ENCODE measurements at regions of chr11 and their contacts with region 1.

Region 1: DNA sequence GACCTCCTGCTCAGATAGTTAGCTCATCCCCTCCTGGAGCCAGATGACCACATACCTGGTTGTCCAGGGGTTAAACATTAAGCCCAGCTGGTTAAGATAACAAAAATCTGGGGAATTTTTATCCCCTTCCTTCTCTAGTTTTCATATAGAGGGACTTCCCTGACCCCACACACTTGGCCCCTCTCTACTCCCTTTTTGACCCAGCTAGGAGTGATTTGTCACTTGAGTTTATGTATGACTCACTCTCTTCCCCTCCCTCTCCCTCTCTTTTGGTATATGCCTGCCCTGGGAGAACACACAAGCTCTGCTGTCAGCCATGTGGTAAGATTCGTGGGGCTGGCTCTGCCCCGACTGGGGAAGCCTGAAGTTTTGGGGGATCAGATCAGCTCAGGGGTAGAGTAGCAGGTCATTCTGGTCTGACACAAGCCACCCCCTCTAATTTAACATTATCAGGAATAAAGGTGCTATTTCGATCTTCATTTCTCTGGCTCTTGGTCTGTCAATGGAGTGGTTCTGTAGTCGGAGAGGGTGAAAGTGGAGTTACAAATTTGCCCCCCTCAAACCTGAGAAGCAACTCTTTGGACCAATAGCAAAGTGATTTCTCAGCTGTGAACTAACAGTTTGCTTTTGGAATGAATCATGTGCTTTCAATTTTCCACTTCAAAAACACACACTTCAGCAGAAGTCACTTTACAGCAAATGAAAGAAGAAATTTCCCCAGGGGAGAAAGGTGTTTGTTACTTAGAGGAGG is 415.3 kb upstream of the CADM1 start:
- DNase-seq: peak; percentile 91
- ATAC-seq: peak; percentile 66
- H3K4me3 ChIP-seq: peak overlapping the region; percentile 15; the same call in 1 of the 2 replicates
- H3K27ac ChIP-seq: peak overlapping the region; percentile 94
- H3K4me1 ChIP-seq: peaks cover 70% of the 10 kb centered on the region
- H3K27me3 ChIP-seq: no peaks in the 10 kb centered on the region
- CTCF ChIP-seq: no peak
- EP300 ChIP-seq: peak; percentile 92 to 93; a peak in 3 of 4 replicates
- POLR2A ChIP-seq: peak; percentile 70
- RAD21 ChIP-seq: peak; percentile 12; the same call in 1 of the 2 replicates

Region 2: GRCh38 chr11:115504276-115505158 is 415.0 kb before region 1 on chr11 and contains the start of gene CADM1:
- CTCF ChIA-PET with region 1: no interaction called
- POLR2A ChIA-PET with region 1: no interaction called
- RAD21 ChIA-PET with region 1: no interaction called
- SMC1A ChIA-PET with region 1: no interaction called
- in situ Hi-C with region 1: no loop called
- intact Hi-C with region 1: loop called (anchors 10 kb)
- DNase-seq: no peak
- ATAC-seq: no peak
- H3K4me3 ChIP-seq: no peak within 1 kb of the TSS
- H3K27ac ChIP-seq: no peak within 1 kb of the TSS
- H3K4me1 ChIP-seq: no peaks in the 10 kb centered on the region
- H3K27me3 ChIP-seq: peaks cover 12 to 29% of the 10 kb centered on the region in 2 experiments
- CTCF ChIP-seq: 0 out of 6 replicates have a peak, but pooled peaks of 2 of the 3 experiments have one; percentile 3 to 18
- EP300 ChIP-seq: no peak
- POLR2A ChIP-seq: peak; percentile 64; the same call in 1 of the 2 replicates
- RAD21 ChIP-seq: no peak
- polyA plus RNA-seq, gene CADM1: not detected

Region 3: GRCh38 chr11:115585361-115586024 is 334.0 kb before region 1 on chr11:
- CTCF ChIA-PET with region 1: no interaction called
- POLR2A ChIA-PET with region 1: interaction called, 3 read pairs
- RAD21 ChIA-PET with region 1: interaction called, 5 read pairs
- SMC1A ChIA-PET with region 1: interaction called, 8 read pairs
- in situ Hi-C with region 1: no loop called
- intact Hi-C with region 1: loop called (anchors 2 kb)
- DNase-seq: peak; percentile 83
- ATAC-seq: peak; percentile 96
- H3K4me3 ChIP-seq: 0 out of 2 replicates have a peak overlapping the region, but pooled peaks have one; percentile 4
- H3K27ac ChIP-seq: peak overlapping the region; percentile 51
- H3K4me1 ChIP-seq: peaks cover 21% of the 10 kb centered on the region
- H3K27me3 ChIP-seq: no peaks in the 10 kb centered on the region
- CTCF ChIP-seq: peak in 1 of 3 experiments; percentile 28; a peak in 1 of 6 replicates
- EP300 ChIP-seq: peak; percentile 14 to 72; a peak in 1 of 4 replicates
- POLR2A ChIP-seq: no peak
- RAD21 ChIP-seq: no peak

Region 4: GRCh38 chr11:115941481-115941993 is 22.0 kb after region 1 on chr11:
- CTCF ChIA-PET with region 1: interaction called, 6 read pairs
- POLR2A ChIA-PET with region 1: interaction called, 6 read pairs
- RAD21 ChIA-PET with region 1: interaction called, 94 read pairs
- SMC1A ChIA-PET with region 1: interaction called, 52 read pairs
- in situ Hi-C with region 1: no loop called
- intact Hi-C with region 1: no loop called
- DNase-seq: no peak
- ATAC-seq: no peak
- H3K4me3 ChIP-seq: no peak overlapping the region
- H3K27ac ChIP-seq: no peak overlapping the region
- H3K4me1 ChIP-seq: peaks cover 7% of the 10 kb centered on the region
- H3K27me3 ChIP-seq: no peaks in the 10 kb centered on the region
- CTCF ChIP-seq: no peak
- EP300 ChIP-seq: no peak
- POLR2A ChIP-seq: no peak
- RAD21 ChIP-seq: no peak

Region 5: DNA sequence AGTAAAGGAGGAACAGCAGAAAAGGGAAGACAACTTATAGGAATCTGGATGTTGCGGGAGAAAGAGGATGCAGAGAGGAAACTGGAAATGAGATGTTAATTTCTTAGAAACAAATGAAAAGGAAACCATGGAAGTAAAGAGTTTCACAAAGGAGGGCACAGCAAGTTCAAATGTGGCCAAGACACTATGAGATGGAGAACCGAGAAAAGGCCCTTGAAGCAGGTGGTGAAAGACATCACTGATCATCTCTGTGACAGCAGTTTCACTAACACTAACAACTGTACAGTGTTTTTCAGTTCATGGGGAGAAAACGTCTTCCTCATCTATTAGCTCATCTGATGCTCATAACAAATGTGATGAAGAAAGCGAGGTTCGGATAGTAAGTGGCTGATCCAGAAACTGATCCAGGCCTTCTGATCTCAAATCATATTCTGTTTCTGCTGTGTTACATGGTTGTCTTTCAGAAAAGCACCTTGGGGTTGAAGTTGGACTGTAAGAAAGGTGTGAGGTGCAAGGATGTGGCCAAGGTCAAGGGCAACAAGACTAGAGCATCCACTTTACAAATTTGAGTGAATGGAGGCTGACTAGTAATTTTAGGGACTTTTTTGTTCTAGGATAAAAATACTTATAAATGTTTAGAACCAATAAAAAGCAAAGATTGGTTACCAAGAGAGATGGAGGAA is 76.8 kb after region 1 on chr11:
- CTCF ChIA-PET with region 1: interaction called, 4 read pairs
- POLR2A ChIA-PET with region 1: interaction called, 3 read pairs
- RAD21 ChIA-PET with region 1: interaction called, 11 read pairs
- SMC1A ChIA-PET with region 1: interaction called, 57 read pairs
- in situ Hi-C with region 1: no loop called
- intact Hi-C with region 1: no loop called
- DNase-seq: peak; percentile 89
- ATAC-seq: peak; percentile 96
- H3K4me3 ChIP-seq: no peak overlapping the region
- H3K27ac ChIP-seq: peak overlapping the region; percentile 79
- H3K4me1 ChIP-seq: peaks cover 25% of the 10 kb centered on the region
- H3K27me3 ChIP-seq: no peaks in the 10 kb centered on the region
- CTCF ChIP-seq: no peak
- EP300 ChIP-seq: peak; percentile 94 to 95; a peak in 3 of 4 replicates
- POLR2A ChIP-seq: no peak
- RAD21 ChIP-seq: no peak

Measured in GM12878 (cell line).